Mammary epithelial cell (primary cell): ENCODE measurements at regions of chr11 and their contacts with region 1.

Region 1: GRCh38 chr11:17629113-17629512 is 82.1 kb downstream of the OTOG start:
- DNase-seq: no peak
- H3K4me3 ChIP-seq: no peak overlapping the region
- H3K27ac ChIP-seq: no peak overlapping the region
- H3K4me1 ChIP-seq: no peaks in the 10 kb centered on the region
- H3K27me3 ChIP-seq: peaks cover 4% of the 10 kb centered on the region
- CTCF ChIP-seq: no peak

Region 2: GRCh38 chr11:17533782-17534415 is 95.2 kb before region 1 on chr11:
- CTCF ChIA-PET with region 1: interaction called, 29 read pairs
- dilution Hi-C with region 1: no loop called
- in situ Hi-C with region 1: no loop called
- intact Hi-C with region 1: no loop called
- DNase-seq: no peak
- H3K4me3 ChIP-seq: no peak overlapping the region
- H3K27ac ChIP-seq: no peak overlapping the region
- H3K4me1 ChIP-seq: no peaks in the 10 kb centered on the region
- H3K27me3 ChIP-seq: peaks cover 12% of the 10 kb centered on the region
- CTCF ChIP-seq: no peak

Region 3: GRCh38 chr11:17873586-17873985 is 244.5 kb after region 1 on chr11:
- CTCF ChIA-PET with region 1: no interaction called
- dilution Hi-C with region 1: no loop called
- in situ Hi-C with region 1: no loop called
- intact Hi-C with region 1: no loop called
- DNase-seq: no peak
- H3K4me3 ChIP-seq: no peak overlapping the region
- H3K27ac ChIP-seq: no peak overlapping the region
- H3K4me1 ChIP-seq: no peaks in the 10 kb centered on the region
- H3K27me3 ChIP-seq: no peaks in the 10 kb centered on the region
- CTCF ChIP-seq: no peak